Sigmoid colon (tissue), 7 donors: ENCODE measurements at regions of chr18 and their contacts with region 1.

Region 1: GRCh38 chr18:42414746-42415454 is 459.9 kb downstream of the PIK3C3 start:
- DNase-seq: no peak
- H3K4me3 ChIP-seq: no peak overlapping the region
- H3K27ac ChIP-seq: peak overlapping the region in 2 of 4 donors; percentile 16 to 70
- H3K4me1 ChIP-seq: peaks cover 0 to 26% (median 14%) of the 10 kb centered on the region in 4 donors
- H3K27me3 ChIP-seq: no peaks in the 10 kb centered on the region
- CTCF ChIP-seq: no peak
- EP300 ChIP-seq: no peak
- POLR2A ChIP-seq: no peak

Region 2: GRCh38 chr18:42533009-42533575 is 118.2 kb after region 1 on chr18:
- intact Hi-C with region 1: loop called (anchors 10 kb)
- DNase-seq: no peak
- H3K4me3 ChIP-seq: no peak overlapping the region
- H3K27ac ChIP-seq: no peak overlapping the region
- H3K4me1 ChIP-seq: peaks cover 0 to 40% (median 24%) of the 10 kb centered on the region in 4 donors
- H3K27me3 ChIP-seq: peaks cover 0 to 6% (median 0%) of the 10 kb centered on the region in 3 donors
- CTCF ChIP-seq: no peak
- EP300 ChIP-seq: no peak
- POLR2A ChIP-seq: no peak